Activated B cell treated with CpG ODN at 0.5 μM for 24 hours (primary cell): ENCODE measurements at regions of chr22 and their contacts with region 1.

Region 1: DNA sequence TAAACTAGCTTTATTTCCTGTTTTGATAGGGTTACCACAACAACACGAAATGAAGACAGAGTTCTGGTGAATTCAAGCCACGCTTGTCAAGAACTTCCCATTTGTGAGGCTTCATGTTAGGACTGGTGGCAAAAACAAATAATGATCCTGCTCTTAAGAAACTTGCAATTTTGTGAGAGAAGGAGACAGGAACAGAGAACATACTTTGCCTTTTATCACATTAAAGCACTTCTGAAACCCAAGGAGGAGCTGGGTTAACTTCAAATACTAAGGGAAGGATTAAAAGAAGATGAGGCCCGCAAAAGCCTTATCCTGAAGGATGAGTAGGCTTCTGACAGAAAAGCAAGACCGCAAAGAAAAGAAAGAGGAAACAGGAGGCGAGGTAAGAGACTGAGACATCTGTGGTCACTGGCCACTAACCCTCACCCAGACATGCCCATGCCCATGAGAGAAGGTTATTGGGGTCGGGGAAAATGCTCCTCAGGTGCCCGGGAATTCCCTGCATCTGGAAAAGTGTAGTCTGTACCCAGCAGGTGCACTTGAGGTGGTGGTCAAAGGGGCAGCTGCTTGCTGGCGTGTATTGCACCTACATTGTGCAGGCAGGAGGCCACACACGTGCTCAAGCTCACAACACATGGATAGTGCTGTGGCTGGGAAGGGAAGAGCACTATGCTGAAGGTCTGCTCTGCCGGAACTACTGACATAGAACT is 50.5 kb downstream of the MAPK1 start:
- DNase-seq: peak; percentile 34
- ATAC-seq: peak; percentile 89
- H3K4me3 Mint-ChIP-seq: peak overlapping the region; percentile 81
- H3K27ac Mint-ChIP-seq: peak overlapping the region; percentile 96
- H3K4me1 Mint-ChIP-seq: peaks cover 80% of the 10 kb centered on the region
- H3K27me3 Mint-ChIP-seq: no peaks in the 10 kb centered on the region
- CTCF ChIP-seq: no peak

Region 2: GRCh38 chr22:21735200-21736076 is 81.5 kb before region 1 on chr22 and contains the start of gene YPEL1:
- CTCF ChIA-PET with region 1: no interaction called
- POLR2A ChIA-PET with region 1: interaction called, 3 read pairs
- intact Hi-C with region 1: loop called (anchors 1 kb)
- DNase-seq: peak; percentile 97
- ATAC-seq: peak; percentile 87
- H3K4me3 Mint-ChIP-seq: peak within 1 kb of the TSS; percentile 93
- H3K27ac Mint-ChIP-seq: peak within 1 kb of the TSS; percentile 96
- H3K4me1 Mint-ChIP-seq: peaks cover 42% of the 10 kb centered on the region
- H3K27me3 Mint-ChIP-seq: no peaks in the 10 kb centered on the region
- CTCF ChIP-seq: no peak
- total RNA-seq, gene YPEL1: 3.0 and 4.1 TPM in 2 replicates

Region 3: GRCh38 chr22:21832291-21833290 is 15.6 kb after region 1 on chr22:
- CTCF ChIA-PET with region 1: no interaction called
- POLR2A ChIA-PET with region 1: no interaction called
- intact Hi-C with region 1: loop called (anchors 1 kb)
- DNase-seq: no peak
- ATAC-seq: no peak
- H3K4me3 Mint-ChIP-seq: no peak overlapping the region
- H3K27ac Mint-ChIP-seq: peak overlapping the region; percentile 27
- H3K4me1 Mint-ChIP-seq: peaks cover 78% of the 10 kb centered on the region
- H3K27me3 Mint-ChIP-seq: no peaks in the 10 kb centered on the region
- CTCF ChIP-seq: no peak